Activated T-helper 1 cell treated with anti-CD3 and anti-CD28 coated beads, Interleukin-12 subunit alpha, Interleukin-12 subunit beta, Interleukin-2, Interleukin-4 antibody, amounts not matched to agents 30 ng/mL and 10 ng/mL and 1 ng/mL, durations not matched to agents 14 hours and 24 hours and 36 hours (primary cell): ENCODE measurements at regions of chrX and their contacts with region 1.

Region 1: GRCh38 chrX:15202454-15203143 is 67.3 kb downstream of the ASB9 start:
- DNase-seq: no peak
- H3K4me3 Mint-ChIP-seq: no peak overlapping the region
- H3K27ac Mint-ChIP-seq: peak overlapping the region; percentile 76
- H3K4me1 Mint-ChIP-seq: peaks cover 35% of the 10 kb centered on the region
- H3K27me3 Mint-ChIP-seq: peaks cover 9% of the 10 kb centered on the region

Region 2: GRCh38 chrX:13653022-13653693 is 1549.4 kb before region 1 on chrX and contains the start of gene TCEANC:
- intact Hi-C with region 1: loop called (anchors 10 kb)
- DNase-seq: peak; percentile 91
- H3K4me3 Mint-ChIP-seq: peak within 1 kb of the TSS; percentile 88
- H3K27ac Mint-ChIP-seq: peak within 1 kb of the TSS; percentile 92
- H3K4me1 Mint-ChIP-seq: peaks cover 20% of the 10 kb centered on the region
- H3K27me3 Mint-ChIP-seq: no peaks in the 10 kb centered on the region
- total RNA-seq, gene TCEANC: 3.9 and 5.0 TPM in 2 replicates

Region 3: GRCh38 chrX:14497184-14497666 is 705.4 kb before region 1 on chrX:
- intact Hi-C with region 1: loop called (anchors 1 kb)
- DNase-seq: no peak
- H3K4me3 Mint-ChIP-seq: peak overlapping the region; percentile 75
- H3K27ac Mint-ChIP-seq: peak overlapping the region; percentile 80
- H3K4me1 Mint-ChIP-seq: peaks cover 13% of the 10 kb centered on the region
- H3K27me3 Mint-ChIP-seq: no peaks in the 10 kb centered on the region

Region 4: GRCh38 chrX:15033917-15034316 is 168.7 kb before region 1 on chrX:
- intact Hi-C with region 1: loop called (anchors 1 kb)
- DNase-seq: no peak
- H3K4me3 Mint-ChIP-seq: no peak overlapping the region
- H3K27ac Mint-ChIP-seq: peak overlapping the region; percentile 36
- H3K4me1 Mint-ChIP-seq: peaks cover 14% of the 10 kb centered on the region
- H3K27me3 Mint-ChIP-seq: no peaks in the 10 kb centered on the region

Region 5: GRCh38 chrX:15087747-15088146 is 114.9 kb before region 1 on chrX:
- intact Hi-C with region 1: no loop called
- DNase-seq: no peak
- H3K4me3 Mint-ChIP-seq: no peak overlapping the region
- H3K27ac Mint-ChIP-seq: no peak overlapping the region
- H3K4me1 Mint-ChIP-seq: no peaks in the 10 kb centered on the region
- H3K27me3 Mint-ChIP-seq: peaks cover 2% of the 10 kb centered on the region

Region 6: GRCh38 chrX:15158736-15159406 is 43.7 kb before region 1 on chrX:
- intact Hi-C with region 1: loop called (anchors 1 kb)
- DNase-seq: peak; percentile 14
- H3K4me3 Mint-ChIP-seq: peak overlapping the region; percentile 86
- H3K27ac Mint-ChIP-seq: peak overlapping the region; percentile 88
- H3K4me1 Mint-ChIP-seq: peaks cover 24% of the 10 kb centered on the region
- H3K27me3 Mint-ChIP-seq: no peaks in the 10 kb centered on the region